ENCODE measurements at regions of chr5 and their contacts with region 1.

Region 1: GRCh38 chr5:178058321-178059012 is 54.9 kb upstream of the N4BP3 start:
- DNase-seq: no peak
- H3K4me3 ChIP-seq: no peak overlapping the region
- H3K4me3 Mint-ChIP-seq: no peak overlapping the region
- H3K27ac ChIP-seq: no peak overlapping the region
- H3K27ac Mint-ChIP-seq: no peak overlapping the region
- H3K4me1 ChIP-seq: no peaks in the 10 kb centered on the region
- H3K4me1 Mint-ChIP-seq: peaks cover 2 to 5% (median 3%) of the 10 kb centered on the region in 4 donors
- H3K27me3 ChIP-seq: no peaks in the 10 kb centered on the region
- H3K27me3 Mint-ChIP-seq: peaks cover 3 to 4% of the 10 kb centered on the region in 2 donors

Region 2: GRCh38 chr5:177336112-177336511 is 722.4 kb before region 1 on chr5:
- CTCF ChIA-PET with region 1: no interaction called
- POLR2A ChIA-PET with region 1: no interaction called
- intact Hi-C with region 1: no loop called
- DNase-seq: no peak
- H3K4me3 ChIP-seq: no peak overlapping the region
- H3K4me3 Mint-ChIP-seq: no peak overlapping the region
- H3K27ac ChIP-seq: no peak overlapping the region
- H3K27ac Mint-ChIP-seq: no peak overlapping the region
- H3K4me1 ChIP-seq: no peaks in the 10 kb centered on the region
- H3K4me1 Mint-ChIP-seq: peaks cover 7 to 17% (median 9%) of the 10 kb centered on the region in 4 donors
- H3K27me3 ChIP-seq: no peaks in the 10 kb centered on the region
- H3K27me3 Mint-ChIP-seq: no peaks in the 10 kb centered on the region

Region 3: DNA sequence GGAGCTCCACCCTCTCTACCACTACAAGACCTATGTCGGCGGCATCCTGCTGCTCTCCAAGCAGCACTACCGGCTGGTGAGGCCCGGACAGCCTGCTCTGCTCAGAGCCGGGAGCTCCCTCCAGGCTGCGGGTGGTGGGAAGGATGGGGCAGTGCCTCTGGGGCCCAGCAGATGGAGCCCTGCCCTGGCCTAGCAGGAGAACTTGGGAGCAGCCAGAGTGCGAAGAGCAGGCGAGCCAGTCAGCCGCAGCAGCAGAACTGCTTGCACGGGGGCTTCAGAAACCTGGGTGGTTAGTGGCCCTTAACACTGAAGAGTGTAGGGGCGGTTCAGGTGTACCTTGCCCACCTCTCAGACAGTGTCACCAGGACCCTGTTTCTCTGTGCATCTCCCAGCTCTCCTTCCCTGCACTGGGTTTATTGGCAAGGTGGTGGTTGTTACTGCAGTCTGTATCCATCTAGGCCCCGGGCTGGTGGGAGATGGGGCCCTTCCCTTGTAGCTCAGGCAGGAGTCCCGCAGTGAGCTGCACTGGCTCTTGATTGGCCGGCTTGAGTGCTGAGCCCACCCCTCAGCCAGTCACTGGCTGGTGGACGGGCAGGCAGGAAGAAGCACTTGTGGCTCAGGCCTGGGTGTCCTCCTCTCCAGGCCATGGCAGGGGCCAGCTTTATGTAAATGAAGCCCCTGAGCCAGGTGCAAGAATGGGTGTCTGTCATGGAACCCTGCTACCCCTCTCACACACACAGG is 450.8 kb before region 1 on chr5:
- CTCF ChIA-PET with region 1: interaction called, 18 read pairs
- POLR2A ChIA-PET with region 1: no interaction called
- intact Hi-C with region 1: loop called (anchors 1 kb)
- DNase-seq: peak; percentile 50 to 58 (median 55)
- H3K4me3 ChIP-seq: no peak overlapping the region
- H3K4me3 Mint-ChIP-seq: peak overlapping the region in 1 of 8 donors; percentile 10
- H3K27ac ChIP-seq: no peak overlapping the region
- H3K27ac Mint-ChIP-seq: peak overlapping the region in 3 of 7 donors; percentile 22 to 68 (median 30)
- H3K4me1 ChIP-seq: peaks cover 5% of the 10 kb centered on the region
- H3K4me1 Mint-ChIP-seq: peaks cover 10 to 20% (median 16%) of the 10 kb centered on the region in 4 donors
- H3K27me3 ChIP-seq: no peaks in the 10 kb centered on the region
- H3K27me3 Mint-ChIP-seq: no peaks in the 10 kb centered on the region

Region 4: DNA sequence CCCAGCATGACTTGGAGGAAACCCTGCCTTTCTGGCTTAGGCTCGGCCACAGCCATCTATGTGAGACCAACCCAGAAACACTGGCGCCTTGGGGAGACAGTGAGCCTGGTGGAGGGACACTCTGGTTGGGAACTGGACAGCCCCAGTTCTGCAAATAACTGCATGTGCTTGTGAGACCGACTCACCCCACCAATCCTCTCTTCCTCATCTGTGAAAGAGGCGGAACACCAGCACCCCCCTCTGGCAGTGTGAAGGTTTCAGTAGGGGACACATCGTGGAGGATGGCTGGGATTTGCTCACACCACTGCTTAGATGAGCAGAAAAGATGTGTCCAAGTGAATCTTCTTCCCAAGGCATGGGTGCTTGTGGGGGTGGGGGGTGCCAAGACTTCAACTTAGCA is 11.4 kb after region 1 on chr5:
- CTCF ChIA-PET with region 1: no interaction called
- POLR2A ChIA-PET with region 1: no interaction called
- intact Hi-C with region 1: no loop called
- DNase-seq: peak in 1 of 5 donors; percentile 11
- H3K4me3 ChIP-seq: no peak overlapping the region
- H3K4me3 Mint-ChIP-seq: no peak overlapping the region
- H3K27ac ChIP-seq: no peak overlapping the region
- H3K27ac Mint-ChIP-seq: no peak overlapping the region
- H3K4me1 ChIP-seq: no peaks in the 10 kb centered on the region
- H3K4me1 Mint-ChIP-seq: peaks cover 0 to 1% (median 0%) of the 10 kb centered on the region in 4 donors
- H3K27me3 ChIP-seq: no peaks in the 10 kb centered on the region
- H3K27me3 Mint-ChIP-seq: peaks cover under 1 to 4% of the 10 kb centered on the region in 2 donors

Measured in CD4-positive, alpha-beta memory T cell (primary cell).